ENCODE measurements at regions of chr1 and their contacts with region 1.

Region 1: GRCh38 chr1:35557292-35558063 is at the starts of genes KIAA0319L and NCDN:
- DNase-seq: peak; percentile 94
- ATAC-seq: peak; percentile 76
- H3K4me3 ChIP-seq: peak within 1 kb of the TSS; percentile 78
- H3K27ac ChIP-seq: peak within 1 kb of the TSS; percentile 91
- H3K4me1 ChIP-seq: peaks cover 33% of the 10 kb centered on the region
- H3K27me3 ChIP-seq: no peaks in the 10 kb centered on the region
- CTCF ChIP-seq: no peak
- total RNA-seq, gene KIAA0319L: 20.9 and 26.7 TPM in 2 replicates
- total RNA-seq, gene NCDN: 25.2 and 30.2 TPM in 2 replicates

Region 2: DNA sequence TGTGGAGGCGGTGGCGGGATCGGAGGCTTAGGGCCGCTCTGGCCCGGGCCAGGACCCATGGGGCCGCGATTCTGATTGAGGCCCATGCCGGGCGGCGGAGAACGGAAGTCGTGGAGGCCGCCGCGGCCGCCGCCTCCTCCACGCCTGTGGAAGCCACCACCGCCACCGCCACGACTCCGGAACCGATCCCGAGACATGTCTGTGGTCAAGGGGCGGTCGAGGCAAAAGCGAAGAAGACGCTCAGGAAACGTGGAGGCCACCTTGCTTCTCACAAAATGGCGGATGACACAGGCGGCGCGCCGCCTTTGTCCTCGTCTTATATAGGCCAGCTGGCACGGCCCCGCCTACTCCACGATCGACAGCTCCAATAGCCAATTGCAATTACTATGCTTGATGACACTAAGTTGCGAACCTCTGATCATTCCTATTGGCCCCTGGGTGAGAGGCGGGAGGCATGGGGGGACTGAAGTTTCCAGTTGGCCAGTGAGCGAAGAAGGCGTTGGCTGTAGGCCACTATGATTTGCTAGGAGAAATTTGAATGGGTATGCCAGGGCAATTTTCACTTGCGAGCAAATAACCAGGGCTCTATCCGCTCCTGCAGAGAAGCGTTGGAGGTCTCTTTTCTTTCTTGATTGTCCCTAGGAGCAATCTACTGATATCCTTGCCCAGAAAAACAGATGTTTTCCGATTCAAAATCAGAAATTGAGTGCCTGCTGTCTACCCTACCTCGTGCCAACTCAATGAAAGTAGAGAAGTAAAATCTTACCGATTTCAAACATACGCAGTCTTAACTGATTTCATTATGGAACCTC is 364.4 kb before region 1 on chr1 and contains the start of gene SFPQ:
- CTCF ChIA-PET with region 1: no interaction called
- POLR2A ChIA-PET with region 1: no interaction called
- intact Hi-C with region 1: loop called (anchors 1 kb)
- DNase-seq: peak; percentile 98
- ATAC-seq: peak; percentile 89
- H3K4me3 ChIP-seq: peak within 1 kb of the TSS; percentile 80
- H3K27ac ChIP-seq: peak within 1 kb of the TSS; percentile 59
- H3K4me1 ChIP-seq: 0 out of 2 replicates have a peak, but pooled peaks cover 11% of the 10 kb centered on the region
- H3K27me3 ChIP-seq: no peaks in the 10 kb centered on the region
- CTCF ChIP-seq: no peak
- total RNA-seq, gene SFPQ: 249 and 322 TPM in 2 replicates